PC-9 (cell line): ENCODE measurements at regions of chr3 and their contacts with region 1.

Region 1: GRCh38 chr3:7367968-7368367 is 507.1 kb downstream of the GRM7 start:
- DNase-seq: no peak
- H3K4me3 ChIP-seq: no peak overlapping the region
- H3K27ac ChIP-seq: no peak overlapping the region
- H3K4me1 ChIP-seq: no peaks in the 10 kb centered on the region
- H3K27me3 ChIP-seq: no peaks in the 10 kb centered on the region
- CTCF ChIP-seq: no peak

Region 2: GRCh38 chr3:6867269-6867668 is 500.7 kb before region 1 on chr3:
- CTCF ChIA-PET with region 1: no interaction called
- POLR2A ChIA-PET with region 1: no interaction called
- intact Hi-C with region 1: no loop called
- DNase-seq: no peak
- H3K4me3 ChIP-seq: no peak overlapping the region
- H3K27ac ChIP-seq: no peak overlapping the region
- H3K4me1 ChIP-seq: no peaks in the 10 kb centered on the region
- H3K27me3 ChIP-seq: peaks cover 12% of the 10 kb centered on the region; the same call in 1 of the 2 replicates
- CTCF ChIP-seq: no peak

Region 3: DNA sequence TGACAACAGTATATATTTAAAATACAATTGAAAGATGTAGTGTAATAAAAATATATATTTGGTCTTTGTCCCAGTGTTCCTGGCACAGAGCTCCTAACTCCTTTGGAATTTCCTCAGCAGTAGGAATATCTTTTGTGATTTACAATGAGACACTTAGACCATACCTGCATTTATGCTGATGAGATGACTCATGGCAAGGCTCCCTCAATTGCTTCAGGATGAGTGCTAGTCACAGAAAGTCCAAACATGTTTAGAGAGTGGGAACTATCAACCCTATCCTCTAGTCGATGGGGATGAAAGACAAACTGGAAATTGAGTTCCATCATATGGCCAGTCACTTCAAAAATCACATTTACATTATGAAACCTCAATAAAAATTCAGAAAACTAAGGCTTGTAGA is 545.3 kb after region 1 on chr3:
- CTCF ChIA-PET with region 1: interaction called, 14 read pairs
- POLR2A ChIA-PET with region 1: no interaction called
- intact Hi-C with region 1: no loop called
- DNase-seq: no peak
- H3K4me3 ChIP-seq: no peak overlapping the region
- H3K27ac ChIP-seq: no peak overlapping the region
- H3K4me1 ChIP-seq: no peaks in the 10 kb centered on the region
- H3K27me3 ChIP-seq: peaks cover 8% of the 10 kb centered on the region; the same call in 1 of the 2 replicates
- CTCF ChIP-seq: no peak